Body of pancreas (tissue), 4 donors: ENCODE measurements at regions of chr6 and their contacts with region 1.

Region 1: GRCh38 chr6:106608062-106608668 is 21.1 kb downstream of the RTN4IP1 start:
- DNase-seq: peak; percentile 22 to 64 (median 30)
- ATAC-seq: peak; percentile 73
- H3K4me3 ChIP-seq: no peak overlapping the region
- H3K27ac ChIP-seq: no peak overlapping the region
- H3K4me1 ChIP-seq: no peaks in the 10 kb centered on the region
- H3K27me3 ChIP-seq: no peaks in the 10 kb centered on the region
- CTCF ChIP-seq: peak; percentile 21 to 90 (median 83)
- POLR2A ChIP-seq: no peak

Region 2: GRCh38 chr6:106512048-106512967 is 95.9 kb before region 1 on chr6:
- intact Hi-C with region 1: no loop called
- DNase-seq: peak; percentile 63 to 78 (median 76)
- ATAC-seq: peak; percentile 80
- H3K4me3 ChIP-seq: peak overlapping the region; percentile 76 to 88
- H3K27ac ChIP-seq: peak overlapping the region; percentile 51 to 95 (median 82)
- H3K4me1 ChIP-seq: peaks cover 38% of the 10 kb centered on the region
- H3K27me3 ChIP-seq: no peaks in the 10 kb centered on the region
- CTCF ChIP-seq: peak in 3 of 7 experiments; percentile 23 to 28 (median 27)
- POLR2A ChIP-seq: peak; percentile 8 to 50 (median 28)

Region 3: DNA sequence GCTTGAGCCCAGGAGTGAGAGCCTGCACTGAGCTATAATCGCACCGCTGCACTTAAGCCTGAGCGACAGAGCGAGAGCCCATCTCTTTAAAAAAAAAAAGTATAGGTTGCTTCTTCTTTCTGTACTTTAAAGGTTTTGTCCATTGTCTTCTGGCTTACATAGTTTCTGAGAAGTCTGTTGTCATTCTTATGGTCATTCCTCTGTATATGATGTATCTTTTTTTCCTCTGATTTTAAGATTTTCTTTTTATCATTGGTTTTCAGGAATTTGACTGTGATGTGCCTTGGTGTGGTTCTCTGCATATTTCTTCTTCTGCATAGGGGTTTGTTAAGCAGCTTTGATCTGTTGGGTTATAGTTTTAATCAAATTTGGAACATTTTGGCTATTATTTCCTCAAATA is 50.3 kb after region 1 on chr6:
- intact Hi-C with region 1: no loop called
- DNase-seq: no peak
- ATAC-seq: no peak
- H3K4me3 ChIP-seq: no peak overlapping the region
- H3K27ac ChIP-seq: no peak overlapping the region
- H3K4me1 ChIP-seq: no peaks in the 10 kb centered on the region
- H3K27me3 ChIP-seq: no peaks in the 10 kb centered on the region
- CTCF ChIP-seq: no peak
- POLR2A ChIP-seq: no peak

Region 4: GRCh38 chr6:106981926-106982325 is 373.8 kb after region 1 on chr6:
- intact Hi-C with region 1: loop called (anchors 10 kb)
- DNase-seq: no peak
- ATAC-seq: no peak
- H3K4me3 ChIP-seq: no peak overlapping the region
- H3K27ac ChIP-seq: no peak overlapping the region
- H3K4me1 ChIP-seq: peaks cover 6% of the 10 kb centered on the region
- H3K27me3 ChIP-seq: no peaks in the 10 kb centered on the region
- CTCF ChIP-seq: no peak
- POLR2A ChIP-seq: no peak